Body of pancreas (tissue), 4 donors: ENCODE measurements at regions of chr12 and their contacts with region 1.

Region 1: DNA sequence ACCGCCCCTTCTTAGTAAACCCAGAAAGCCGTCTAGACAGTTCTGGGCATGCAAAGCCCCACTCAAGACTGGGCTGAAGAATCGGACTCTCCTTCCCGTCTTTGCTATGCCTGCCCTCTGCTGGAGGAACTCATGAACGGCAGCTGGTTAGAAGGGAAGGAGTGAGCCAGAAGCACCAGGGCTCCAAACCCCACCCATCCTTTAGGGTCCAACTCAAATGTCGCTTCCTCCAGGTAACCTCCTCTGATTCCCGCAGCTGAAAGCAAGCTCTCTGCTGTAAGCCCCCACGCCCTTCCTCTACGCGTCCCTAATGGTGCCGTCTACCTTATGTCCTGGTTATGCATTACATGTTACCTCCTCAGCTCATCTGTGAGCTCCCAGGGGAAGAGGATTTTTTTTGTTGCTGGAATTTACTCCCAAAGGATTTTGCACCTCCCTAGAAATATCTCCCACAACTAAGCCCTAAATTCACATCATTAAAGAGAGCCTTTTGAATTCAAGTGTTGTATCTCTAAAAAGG is 59.0 kb upstream of the SCN8A start:
- DNase-seq: peak; percentile 77 to 82 (median 78)
- ATAC-seq: peak; percentile 87
- H3K4me3 ChIP-seq: no peak overlapping the region
- H3K27ac ChIP-seq: no peak overlapping the region
- H3K4me1 ChIP-seq: no peaks in the 10 kb centered on the region
- H3K27me3 ChIP-seq: peaks cover 0 to 4% of the 10 kb centered on the region in 2 donors
- CTCF ChIP-seq: peak; percentile 78 to 86 (median 82)
- POLR2A ChIP-seq: no peak

Region 2: DNA sequence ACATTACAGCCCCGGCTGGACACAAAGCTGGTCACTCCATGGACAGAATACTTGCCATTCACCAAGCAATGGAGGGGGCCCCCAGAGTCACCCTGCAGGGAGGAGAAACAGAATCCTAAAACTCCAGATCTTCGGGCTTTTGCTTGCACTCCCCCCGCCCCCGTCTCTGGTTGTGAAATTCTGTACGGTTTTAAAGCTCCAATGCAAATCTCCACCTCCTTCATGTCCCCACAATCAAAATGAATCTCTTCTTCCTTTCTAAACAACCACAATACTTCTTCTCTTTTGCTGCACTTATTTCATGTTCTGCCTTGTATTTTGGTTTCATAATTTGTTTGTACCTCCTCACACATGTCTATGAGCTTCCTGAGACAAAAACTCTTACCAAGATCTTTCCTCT is 202.3 kb before region 1 on chr12:
- intact Hi-C with region 1: no loop called
- DNase-seq: no peak
- ATAC-seq: no peak
- H3K4me3 ChIP-seq: no peak overlapping the region
- H3K27ac ChIP-seq: no peak overlapping the region
- H3K4me1 ChIP-seq: no peaks in the 10 kb centered on the region
- H3K27me3 ChIP-seq: no peaks in the 10 kb centered on the region
- CTCF ChIP-seq: no peak
- POLR2A ChIP-seq: no peak

Region 3: GRCh38 chr12:51424662-51425438 is 107.2 kb before region 1 on chr12 and contains the start of gene SLC4A8:
- intact Hi-C with region 1: loop called (anchors 5 kb)
- DNase-seq: peak; percentile 58 to 78 (median 72)
- ATAC-seq: peak; percentile 68
- H3K4me3 ChIP-seq: no peak within 1 kb of the TSS
- H3K27ac ChIP-seq: no peak within 1 kb of the TSS
- H3K4me1 ChIP-seq: peaks cover 18% of the 10 kb centered on the region
- H3K27me3 ChIP-seq: peaks cover 0 to 6% of the 10 kb centered on the region in 2 donors
- CTCF ChIP-seq: peak; percentile 26 to 63 (median 60)
- POLR2A ChIP-seq: no peak
- total RNA-seq, gene SLC4A8: 1.6 to 2.3 TPM

Region 4: GRCh38 chr12:51814311-51815088 is 282.5 kb after region 1 on chr12:
- intact Hi-C with region 1: loop called (anchors 10 kb)
- DNase-seq: peak; percentile 82 to 87 (median 85)
- ATAC-seq: peak; percentile 92
- H3K4me3 ChIP-seq: peak overlapping the region; percentile 17 to 54
- H3K27ac ChIP-seq: peak overlapping the region; percentile 27 to 85 (median 78)
- H3K4me1 ChIP-seq: peaks cover 18% of the 10 kb centered on the region
- H3K27me3 ChIP-seq: no peaks in the 10 kb centered on the region
- CTCF ChIP-seq: peak in 6 of 7 experiments; percentile 9 to 93 (median 72)
- POLR2A ChIP-seq: peak; percentile 48 to 81 (median 59)

Region 5: DNA sequence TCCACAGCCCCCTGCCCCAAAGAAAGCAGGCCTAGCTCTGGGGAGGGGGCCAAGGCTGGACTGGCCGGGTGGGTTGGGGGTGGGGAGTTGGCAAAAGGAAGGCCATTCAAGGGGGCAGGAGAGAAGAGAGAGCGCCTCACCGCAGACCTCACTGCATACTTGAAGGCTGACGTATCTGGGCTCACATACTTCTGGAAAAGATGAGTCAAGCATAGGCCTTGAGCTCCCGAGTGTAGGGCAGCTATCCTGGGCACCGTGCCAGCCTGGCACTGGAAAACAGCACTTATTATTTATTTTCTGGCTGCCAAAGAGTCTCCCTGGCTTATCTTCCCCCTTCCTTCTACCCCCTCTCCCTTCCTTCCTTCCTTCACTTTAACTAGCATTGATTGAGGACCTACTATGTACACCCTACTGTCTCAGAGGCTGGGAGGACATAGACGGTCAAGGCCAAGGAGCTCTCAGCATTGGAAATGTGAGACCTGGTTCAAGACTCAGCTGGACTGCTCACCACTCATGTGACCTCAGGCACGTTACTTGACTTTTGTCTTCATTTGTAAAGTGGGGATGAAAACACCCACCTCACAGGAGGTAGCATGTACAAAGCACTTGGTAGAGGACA is 660.2 kb after region 1 on chr12:
- intact Hi-C with region 1: no loop called
- DNase-seq: peak; percentile 94 to 98 (median 96)
- ATAC-seq: peak; percentile 94
- H3K4me3 ChIP-seq: no peak overlapping the region
- H3K27ac ChIP-seq: peak overlapping the region; percentile 86 to 92 (median 90)
- H3K4me1 ChIP-seq: peaks cover 44% of the 10 kb centered on the region
- H3K27me3 ChIP-seq: no peaks in the 10 kb centered on the region
- CTCF ChIP-seq: no peak
- POLR2A ChIP-seq: no peak